Testis (tissue), 5 donors: ENCODE measurements at regions of chr5 and their contacts with region 1.

Region 1: DNA sequence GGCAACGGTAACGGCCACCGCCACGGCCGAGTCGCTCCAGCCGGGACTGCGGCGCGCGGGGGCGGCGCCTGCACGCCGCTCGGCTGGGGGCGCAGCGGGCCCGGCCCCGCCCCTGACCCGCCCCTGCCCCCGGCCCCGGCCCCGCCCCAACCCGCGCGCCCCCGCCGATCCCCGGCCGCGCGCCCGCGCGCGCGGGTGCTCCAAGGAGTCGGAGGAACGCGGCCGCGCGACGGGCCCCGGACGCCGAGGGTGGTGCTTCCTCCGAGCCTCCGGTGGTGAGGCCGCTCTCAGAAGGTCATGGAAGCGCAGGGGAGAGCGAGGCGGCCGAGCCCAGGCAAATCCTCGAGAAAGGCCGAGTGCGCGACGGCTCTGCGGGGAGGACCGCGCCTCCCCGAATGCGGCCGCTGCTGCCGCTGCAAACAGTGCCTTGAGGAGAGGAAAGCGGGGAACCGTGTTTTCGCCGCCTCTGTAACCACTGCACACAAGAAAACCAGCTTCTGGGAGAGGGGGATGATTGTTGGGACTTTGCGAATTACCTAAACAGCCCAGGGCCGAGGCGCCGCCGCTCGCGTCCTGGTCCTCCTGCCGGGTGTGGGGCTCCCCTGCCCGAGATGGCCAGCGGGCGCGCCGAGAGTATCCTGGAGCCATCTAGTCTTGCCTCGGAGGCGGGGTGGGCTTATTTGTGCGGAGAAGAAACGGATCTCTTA is at the start of gene LIFR:
- DNase-seq: peak; percentile 92
- H3K4me3 ChIP-seq: peak within 1 kb of the TSS; percentile 89 to 99
- H3K27ac ChIP-seq: peak within 1 kb of the TSS; percentile 95 to 99
- H3K4me1 ChIP-seq: peaks cover 11% of the 10 kb centered on the region
- H3K27me3 ChIP-seq: no peaks in the 10 kb centered on the region
- CTCF ChIP-seq: no peak
- POLR2A ChIP-seq: no peak
- total RNA-seq, gene LIFR: 49.9 to 63.9 TPM

Region 2: DNA sequence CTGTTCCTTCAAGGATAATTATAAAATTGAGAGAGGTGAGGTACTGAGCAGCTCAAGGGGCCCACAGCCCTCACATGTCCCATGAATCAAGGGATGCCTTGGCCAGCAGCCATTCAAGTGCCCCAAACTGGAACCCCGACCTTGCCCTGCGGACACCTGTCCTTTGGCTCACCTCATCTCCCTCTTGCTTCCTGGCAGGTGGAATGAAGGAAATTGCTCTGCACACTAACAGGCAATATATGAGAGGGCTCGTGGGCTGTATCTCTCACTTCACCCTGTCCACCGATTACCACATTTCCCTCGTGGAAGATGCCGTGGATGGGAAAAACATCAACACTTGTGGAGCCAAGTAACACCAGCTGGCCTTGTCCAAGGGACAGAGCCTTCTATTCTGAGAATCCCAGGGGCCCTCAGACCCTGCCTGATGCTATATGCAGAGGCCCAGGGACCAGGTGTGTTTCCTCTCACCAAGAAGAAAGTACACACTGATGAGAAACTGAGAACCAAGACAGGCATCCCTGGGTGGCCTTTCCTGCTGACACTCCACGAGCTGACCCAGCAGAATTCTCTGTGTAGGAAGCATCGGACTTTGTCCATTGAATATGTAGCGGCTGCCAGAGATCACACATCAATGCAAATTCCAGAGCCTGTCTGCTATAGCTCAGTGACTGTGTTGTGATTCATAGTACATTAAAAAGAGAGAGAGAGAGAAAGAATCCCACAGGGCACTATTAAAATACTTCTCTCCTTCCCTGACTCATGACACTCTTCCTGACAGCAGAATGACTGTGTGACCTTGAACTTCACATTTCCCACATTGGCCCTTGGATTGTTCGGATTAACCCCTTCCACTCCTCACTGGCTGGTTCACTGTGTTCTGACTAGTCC is 92.9 kb before region 1 on chr5:
- intact Hi-C with region 1: loop called (anchors 10 kb)
- DNase-seq: peak; percentile 57
- H3K4me3 ChIP-seq: no peak overlapping the region
- H3K27ac ChIP-seq: peak overlapping the region in 1 of 2 donors; percentile 77
- H3K4me1 ChIP-seq: peaks cover 46% of the 10 kb centered on the region
- H3K27me3 ChIP-seq: no peaks in the 10 kb centered on the region
- CTCF ChIP-seq: no peak
- POLR2A ChIP-seq: no peak